Activated T-helper 1 cell treated with anti-CD3 and anti-CD28 coated beads, Interleukin-12 subunit alpha, Interleukin-12 subunit beta, Interleukin-2, Interleukin-4 antibody, amounts not matched to agents 30 ng/mL and 10 ng/mL and 1 ng/mL, durations not matched to agents 14 hours and 24 hours and 36 hours (primary cell): ENCODE measurements at regions of chr11 and their contacts with region 1.

Region 1: GRCh38 chr11:36564376-36565030 is 3.3 kb upstream of the RAG1 start:
- DNase-seq: peak; percentile 21
- H3K4me3 Mint-ChIP-seq: peak overlapping the region; percentile 63
- H3K27ac Mint-ChIP-seq: no peak overlapping the region
- H3K4me1 Mint-ChIP-seq: peaks cover 19% of the 10 kb centered on the region
- H3K27me3 Mint-ChIP-seq: peaks cover 44% of the 10 kb centered on the region

Region 2: DNA sequence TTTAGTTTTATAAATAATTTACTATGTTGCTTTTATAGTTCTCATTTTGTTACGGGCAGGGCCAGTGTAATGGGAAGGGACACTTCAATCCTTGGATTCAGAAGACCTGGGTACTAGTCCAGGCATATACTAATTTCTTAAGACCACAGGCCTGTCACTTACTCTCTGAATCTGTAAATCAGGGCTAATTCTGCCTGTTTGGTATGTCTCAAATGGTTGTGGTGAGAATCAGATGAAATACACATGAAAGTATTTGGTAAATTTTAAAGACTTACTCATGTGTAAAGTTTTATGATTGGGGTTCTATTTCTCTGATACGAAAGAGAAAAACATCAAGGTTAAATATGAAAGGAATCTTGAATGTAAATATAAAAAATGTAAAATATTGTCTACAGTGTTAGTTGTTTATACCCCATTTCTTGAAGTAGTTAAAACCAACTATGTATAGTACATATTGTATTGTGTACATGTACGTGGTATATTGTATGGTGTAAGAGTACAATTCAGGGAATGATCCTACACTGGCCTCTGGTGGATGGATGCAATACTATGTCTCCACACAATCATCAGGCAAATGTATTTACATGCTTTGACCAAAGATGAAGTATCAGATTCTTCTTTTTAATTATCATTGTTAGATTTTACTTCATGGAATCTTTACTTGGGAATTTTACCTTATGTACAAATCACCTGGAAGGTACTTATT is 58.1 kb after region 1 on chr11:
- intact Hi-C with region 1: loop called (anchors 1 kb)
- DNase-seq: no peak
- H3K4me3 Mint-ChIP-seq: no peak overlapping the region
- H3K27ac Mint-ChIP-seq: no peak overlapping the region
- H3K4me1 Mint-ChIP-seq: no peaks in the 10 kb centered on the region
- H3K27me3 Mint-ChIP-seq: peaks cover 8% of the 10 kb centered on the region

Region 3: DNA sequence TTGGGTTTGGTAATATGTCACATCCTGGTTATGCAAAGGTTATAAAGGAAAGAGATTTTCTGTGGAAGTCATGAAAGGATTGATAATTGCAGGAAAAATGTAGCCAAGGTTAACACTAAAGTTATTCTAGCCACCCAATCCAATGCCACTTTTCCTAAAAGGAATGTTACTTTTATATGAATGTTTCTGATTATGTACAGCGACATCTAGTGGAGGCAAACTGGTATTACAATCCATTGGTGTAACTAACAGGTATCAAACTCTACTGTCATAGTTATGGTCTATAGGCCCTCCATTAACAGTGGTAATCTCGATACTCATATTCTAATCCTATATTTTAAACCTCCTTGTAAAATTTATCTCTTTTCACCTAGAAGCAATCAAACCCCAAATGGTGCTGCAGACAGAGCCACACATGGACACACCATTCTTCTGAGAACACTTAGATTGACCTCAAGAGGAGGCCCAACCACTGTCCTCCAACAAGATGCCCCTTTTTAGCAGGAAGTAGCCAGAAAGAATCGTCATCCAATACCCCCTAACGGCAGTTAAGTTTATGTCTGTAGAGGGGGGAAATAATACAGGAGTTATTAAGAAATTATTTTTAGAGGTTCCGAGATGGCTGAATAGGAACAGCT is 108.4 kb after region 1 on chr11:
- intact Hi-C with region 1: loop called (anchors 1 kb)
- DNase-seq: no peak
- H3K4me3 Mint-ChIP-seq: no peak overlapping the region
- H3K27ac Mint-ChIP-seq: no peak overlapping the region
- H3K4me1 Mint-ChIP-seq: no peaks in the 10 kb centered on the region
- H3K27me3 Mint-ChIP-seq: peaks cover 3% of the 10 kb centered on the region

Region 4: DNA sequence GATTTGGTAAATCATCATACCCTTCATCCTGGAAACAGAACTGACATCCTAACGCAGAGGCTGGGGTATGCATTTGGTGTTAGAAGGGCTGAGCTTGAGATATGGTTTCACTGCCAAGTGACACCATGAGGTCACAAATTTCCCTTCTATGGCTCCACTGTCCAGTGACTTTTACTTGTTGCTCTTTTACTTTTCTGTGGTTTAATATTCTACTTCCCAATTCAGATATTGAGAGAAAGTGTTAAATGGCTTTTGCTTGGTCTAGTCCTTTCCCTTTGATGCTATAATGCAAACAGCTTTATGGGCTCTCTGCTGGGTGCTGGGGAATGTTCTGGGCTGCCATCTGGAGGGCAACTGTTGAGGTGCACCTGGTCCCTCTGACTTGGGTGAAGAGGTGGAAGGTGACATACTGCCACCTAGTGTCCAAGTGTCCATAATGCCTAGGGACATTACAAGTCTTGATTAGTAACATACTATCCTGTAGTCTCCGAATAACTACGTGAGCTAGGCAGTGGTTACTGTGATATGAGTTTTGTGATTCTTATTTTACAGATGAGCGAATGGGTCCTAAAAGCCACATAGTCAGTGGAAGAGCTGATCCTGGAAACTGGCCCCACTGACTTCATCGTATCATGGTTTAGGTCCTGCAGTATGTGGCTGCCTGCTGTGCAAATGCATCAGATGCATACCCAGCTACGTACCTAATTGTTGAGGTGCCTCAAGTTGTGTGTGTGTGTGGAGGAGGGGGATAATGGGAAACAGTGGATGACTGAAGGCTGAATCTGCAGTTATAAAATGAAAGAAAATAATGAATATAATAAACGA is 182.6 kb after region 1 on chr11:
- intact Hi-C with region 1: loop called (anchors 1 kb)
- DNase-seq: peak; percentile 79
- H3K4me3 Mint-ChIP-seq: no peak overlapping the region
- H3K27ac Mint-ChIP-seq: no peak overlapping the region
- H3K4me1 Mint-ChIP-seq: no peaks in the 10 kb centered on the region
- H3K27me3 Mint-ChIP-seq: peaks cover 9% of the 10 kb centered on the region